Dorsolateral prefrontal cortex (tissue), 120 donors: ENCODE measurements at regions of chr1 and their contacts with region 1.

Region 1: GRCh38 chr1:212414328-212415106 is at the start of gene PACC1:
- DNase-seq: peak; percentile 84 to 95 (median 87)
- H3K4me3 ChIP-seq: peak within 1 kb of the TSS; percentile 64 to 98 (median 89)
- H3K27ac ChIP-seq: peak within 1 kb of the TSS; percentile 76 to 99 (median 95)
- H3K27me3 ChIP-seq: no peaks in the 10 kb centered on the region
- CTCF ChIP-seq: peak in 38 of 56 donors; percentile 6 to 65 (median 28)
- total RNA-seq, gene PACC1: 6.9 to 82.7 (median 24.1) TPM

Region 2: DNA sequence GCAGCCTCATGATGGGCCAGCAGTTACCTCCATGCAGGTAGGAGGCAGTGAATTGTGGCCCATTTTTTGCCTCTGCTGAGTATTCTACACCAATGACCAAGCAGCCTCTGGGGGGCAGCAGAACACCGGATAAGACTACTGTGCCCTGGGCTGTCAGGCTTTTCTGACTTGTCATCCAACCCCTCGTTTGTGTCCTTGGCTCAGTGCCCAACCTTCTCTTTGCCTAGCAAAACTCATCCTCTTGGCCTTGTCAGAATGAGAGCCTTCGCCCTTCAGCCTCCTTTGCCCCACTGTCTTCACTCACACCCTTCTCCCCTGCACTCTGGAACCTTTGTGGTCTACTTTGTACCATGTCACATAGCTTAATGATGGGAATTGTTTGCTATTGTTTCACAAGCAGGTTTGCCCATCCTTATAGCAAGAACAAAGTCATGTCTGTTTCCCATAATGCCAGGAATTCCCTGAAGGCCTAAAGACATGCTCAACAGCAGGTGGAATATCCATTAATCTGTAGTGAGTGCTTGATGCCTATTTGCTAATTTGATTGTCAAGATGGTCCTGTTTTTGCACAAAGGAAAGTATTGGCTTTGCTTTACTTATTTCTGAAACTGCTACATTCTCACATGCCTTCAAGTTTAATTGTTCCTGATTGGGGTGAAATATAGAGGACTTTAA is 1829.9 kb before region 1 on chr1:
- intact Hi-C with region 1: no loop called
- DNase-seq: peak; percentile 86 to 98 (median 94)
- H3K4me3 ChIP-seq: no peak overlapping the region
- H3K27ac ChIP-seq: peak overlapping the region in 53 of 59 donors; percentile 3 to 86 (median 66)
- H3K27me3 ChIP-seq: no peaks in the 10 kb centered on the region
- CTCF ChIP-seq: peak; percentile 53 to 96 (median 87)

Region 3: DNA sequence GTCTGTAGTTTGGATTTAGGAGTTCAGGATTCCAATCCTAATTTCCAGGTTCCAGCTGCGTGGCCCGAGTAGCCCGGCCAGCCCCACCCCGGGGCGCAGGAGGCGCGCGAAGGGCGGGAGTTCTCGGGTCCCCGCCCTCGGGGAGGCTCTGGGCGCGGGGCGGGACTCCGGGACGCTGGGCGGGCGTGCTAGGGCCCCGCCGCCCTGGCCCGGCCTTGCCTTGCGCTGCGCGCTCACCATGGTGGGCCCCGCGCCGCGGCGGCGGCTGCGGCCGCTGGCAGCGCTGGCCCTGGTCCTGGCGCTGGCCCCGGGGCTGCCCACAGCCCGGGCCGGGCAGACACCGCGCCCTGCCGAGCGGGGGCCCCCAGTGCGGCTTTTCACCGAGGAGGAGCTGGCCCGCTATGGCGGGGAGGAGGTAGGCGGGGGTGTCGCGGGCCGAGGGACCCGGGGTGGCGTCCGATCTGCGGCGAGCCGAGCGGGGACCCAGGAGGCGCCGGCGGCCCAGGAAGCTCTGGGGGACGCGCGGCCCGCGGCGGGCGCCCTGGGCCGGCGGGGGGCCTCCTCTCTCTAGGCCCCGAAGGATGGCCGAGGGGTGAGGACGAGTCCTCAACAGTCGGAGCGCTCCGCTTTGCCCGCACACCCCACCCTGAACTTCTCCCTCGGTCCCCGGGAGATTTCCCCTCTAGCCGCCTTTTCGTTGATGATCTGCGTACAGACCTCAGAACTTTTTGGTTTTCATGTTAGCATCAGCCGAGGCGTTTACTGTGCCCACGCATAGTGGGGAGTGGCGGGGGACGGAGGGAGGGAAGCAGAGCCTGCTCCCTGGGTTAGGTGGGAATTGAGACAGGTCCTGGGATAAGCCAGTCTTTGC is 18.4 kb after region 1 on chr1 and contains the start of gene NENF:
- intact Hi-C with region 1: loop called (anchors 2 kb)
- DNase-seq: peak; percentile 58 to 90 (median 78)
- H3K4me3 ChIP-seq: peak within 1 kb of the TSS; percentile 49 to 93 (median 79)
- H3K27ac ChIP-seq: peak within 1 kb of the TSS; percentile 40 to 97 (median 90)
- H3K27me3 ChIP-seq: no peaks in the 10 kb centered on the region
- CTCF ChIP-seq: peak in 8 of 56 donors; percentile 3 to 27 (median 19)
- total RNA-seq, gene NENF: 43.3 to 144 (median 67.5) TPM

Region 4: GRCh38 chr1:212915245-212916091 is 501.0 kb after region 1 on chr1:
- intact Hi-C with region 1: no loop called
- DNase-seq: no peak
- H3K4me3 ChIP-seq: no peak overlapping the region
- H3K27ac ChIP-seq: no peak overlapping the region
- H3K27me3 ChIP-seq: peaks cover 0 to 5% (median 0%) of the 10 kb centered on the region in 45 donors
- CTCF ChIP-seq: peak in 31 of 56 donors; percentile 8 to 46 (median 24)